Activated naive CD4-positive, alpha-beta T cell treated with anti-CD3 and anti-CD28 coated beads for 36 hours (primary cell): ENCODE measurements at regions of chr16 and their contacts with region 1.

Region 1: GRCh38 chr16:77788181-77789084 is at the start of gene VAT1L:
- DNase-seq: peak; percentile 5
- H3K4me3 Mint-ChIP-seq: peak within 1 kb of the TSS; percentile 66
- H3K27ac Mint-ChIP-seq: no peak within 1 kb of the TSS
- H3K4me1 Mint-ChIP-seq: peaks cover 7% of the 10 kb centered on the region
- H3K27me3 Mint-ChIP-seq: peaks cover 63% of the 10 kb centered on the region
- total RNA-seq, gene VAT1L: not detected

Region 2: GRCh38 chr16:77696149-77696548 is 92.3 kb before region 1 on chr16:
- CTCF ChIA-PET with region 1: no interaction called
- intact Hi-C with region 1: no loop called
- DNase-seq: no peak
- H3K4me3 Mint-ChIP-seq: no peak overlapping the region
- H3K27ac Mint-ChIP-seq: no peak overlapping the region
- H3K4me1 Mint-ChIP-seq: no peaks in the 10 kb centered on the region
- H3K27me3 Mint-ChIP-seq: peaks cover 19% of the 10 kb centered on the region

Region 3: DNA sequence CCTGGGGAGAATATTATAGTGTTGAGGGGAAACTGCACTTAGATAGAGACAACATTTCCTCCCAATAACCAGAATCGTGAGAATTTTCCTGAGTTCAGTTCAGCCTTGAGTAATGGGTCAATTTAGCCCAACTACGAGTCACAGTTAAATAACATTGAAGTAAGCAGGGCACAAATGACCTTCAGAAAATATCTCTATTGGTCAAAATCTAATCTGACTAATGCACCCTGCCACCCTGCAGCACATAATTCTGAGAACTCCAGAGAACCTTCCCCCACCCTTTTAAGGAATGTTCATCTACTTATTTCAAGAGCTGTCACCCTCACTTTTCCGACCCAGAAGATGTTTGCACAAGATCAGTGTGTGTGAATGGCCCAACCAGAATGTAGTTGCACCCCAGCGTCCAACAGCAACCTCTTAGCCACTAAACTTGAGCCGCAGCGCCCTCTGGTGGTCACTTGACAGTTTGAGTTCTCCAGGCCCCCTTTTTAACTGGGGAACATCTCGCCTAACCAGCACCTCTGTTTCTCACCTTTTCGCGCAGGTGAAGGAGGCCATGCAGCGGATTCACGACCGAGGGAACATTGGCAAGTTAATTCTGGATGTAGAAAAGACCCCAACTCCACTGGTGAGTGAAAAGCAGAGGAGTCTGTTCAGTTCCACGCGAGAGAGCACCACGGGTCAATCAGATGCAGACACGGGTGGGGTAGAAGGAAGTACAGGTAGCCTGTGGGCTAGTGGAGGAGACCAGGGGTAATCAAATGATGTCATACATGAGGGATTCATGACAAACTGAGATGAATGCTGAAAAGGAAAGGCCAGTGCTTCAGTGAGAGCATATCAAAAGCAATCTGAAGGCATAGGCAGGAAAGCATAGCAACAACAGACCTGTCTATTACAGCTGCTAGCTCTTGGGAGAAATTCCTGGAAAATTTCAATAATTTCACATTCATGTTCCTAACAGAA is 183.2 kb after region 1 on chr16:
- CTCF ChIA-PET with region 1: no interaction called
- intact Hi-C with region 1: loop called (anchors 10 kb)
- DNase-seq: peak; percentile 85
- H3K4me3 Mint-ChIP-seq: no peak overlapping the region
- H3K27ac Mint-ChIP-seq: no peak overlapping the region
- H3K4me1 Mint-ChIP-seq: peaks cover 3% of the 10 kb centered on the region
- H3K27me3 Mint-ChIP-seq: peaks cover 14% of the 10 kb centered on the region

Region 4: GRCh38 chr16:78106686-78107085 is 318.3 kb after region 1 on chr16:
- CTCF ChIA-PET with region 1: no interaction called
- intact Hi-C with region 1: no loop called
- DNase-seq: no peak
- H3K4me3 Mint-ChIP-seq: no peak overlapping the region
- H3K27ac Mint-ChIP-seq: no peak overlapping the region
- H3K4me1 Mint-ChIP-seq: peaks cover 7% of the 10 kb centered on the region
- H3K27me3 Mint-ChIP-seq: no peaks in the 10 kb centered on the region